SK-MEL-5 (cell line): ENCODE measurements at regions of chr17 and their contacts with region 1.

Region 1: GRCh38 chr17:64565563-64565962 is 58.8 kb downstream of the CEP95 start:
- DNase-seq: no peak

Region 2: GRCh38 chr17:64388961-64389565 is 176.5 kb before region 1 on chr17:
- in situ Hi-C with region 1: no loop called
- DNase-seq: no peak

Region 3: GRCh38 chr17:64459284-64459747 is 106.2 kb before region 1 on chr17:
- in situ Hi-C with region 1: no loop called
- DNase-seq: no peak

Region 4: DNA sequence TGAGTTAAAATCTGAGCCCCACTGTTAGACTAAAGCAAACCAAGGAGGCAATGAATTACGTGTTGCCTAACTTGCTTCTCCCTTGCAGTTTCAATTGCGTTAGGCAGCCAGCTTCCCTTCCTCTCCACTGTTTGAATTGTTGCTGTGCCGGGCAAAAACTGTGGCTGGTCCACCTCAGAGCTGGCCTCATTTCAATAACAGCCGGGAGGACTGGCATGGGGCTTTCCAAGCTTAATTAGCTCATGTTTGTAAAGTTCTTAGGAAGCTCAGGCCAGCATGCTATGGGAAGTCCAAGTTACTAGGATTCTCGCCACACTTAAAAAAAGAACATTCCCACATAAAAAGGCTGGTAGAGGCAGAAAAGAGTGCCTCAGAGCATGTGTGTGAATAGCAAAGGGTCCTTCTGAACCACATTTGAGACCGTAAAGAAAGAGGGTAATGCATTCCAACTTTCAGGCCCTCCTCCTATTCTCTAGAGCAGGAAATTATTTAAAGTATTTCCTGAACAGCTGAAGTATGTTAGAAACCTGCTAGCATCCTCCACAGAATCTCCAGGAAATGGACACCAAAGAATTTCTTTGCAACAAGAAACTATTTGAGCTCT is 175.6 kb after region 1 on chr17:
- in situ Hi-C with region 1: loop called (anchors 10 kb)
- DNase-seq: no peak